Aorta (tissue), 5 donors: ENCODE measurements at regions of chr13 and their contacts with region 1.

Region 1: DNA sequence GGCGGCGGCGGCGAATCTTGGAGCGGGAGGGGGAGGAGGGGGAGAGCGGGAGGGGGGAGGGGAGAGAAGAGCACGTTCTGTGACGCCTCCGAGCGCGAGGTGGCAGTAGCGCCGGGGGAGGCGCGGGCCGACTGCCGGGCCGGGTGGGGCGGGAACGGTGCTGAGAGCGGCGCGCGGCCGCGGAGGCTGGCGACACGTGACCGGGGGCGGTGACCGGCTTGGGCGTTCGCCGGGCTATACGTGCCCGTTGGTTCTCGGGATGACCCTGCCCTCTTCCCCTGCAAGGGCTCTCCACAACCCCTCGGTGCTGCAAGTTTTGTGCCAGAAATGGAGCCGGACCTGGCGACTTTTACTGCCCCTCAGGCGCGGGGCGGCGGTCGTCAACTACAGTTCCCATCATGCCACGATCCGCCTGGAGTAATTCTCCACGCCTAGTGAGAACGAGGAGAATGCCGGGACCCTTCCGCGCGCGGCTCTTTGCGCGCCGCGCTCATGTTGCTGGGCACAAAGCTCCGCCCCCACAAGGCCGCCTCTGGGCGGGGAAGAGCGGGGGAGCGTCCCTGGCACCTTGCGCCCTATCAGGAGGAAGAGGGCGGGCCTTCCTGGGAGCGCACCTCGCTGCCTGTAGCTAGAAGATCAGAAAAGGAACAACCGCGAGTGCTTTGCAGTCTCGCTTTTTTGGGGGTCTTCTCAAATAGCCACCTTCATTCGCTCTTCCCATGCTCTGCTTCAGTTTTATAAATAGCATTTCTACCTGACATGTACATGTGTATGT is at the start of gene KPNA3:
- DNase-seq: peak; percentile 98
- ATAC-seq: peak; percentile 97
- H3K4me3 ChIP-seq: peak within 1 kb of the TSS; percentile 61 to 94
- H3K27ac ChIP-seq: peak within 1 kb of the TSS; percentile 72 to 73
- H3K4me1 ChIP-seq: peaks cover 0 to 3% of the 10 kb centered on the region in 2 donors
- H3K27me3 ChIP-seq: no peaks in the 10 kb centered on the region
- total RNA-seq, gene KPNA3: 29.3 to 29.9 TPM

Region 2: DNA sequence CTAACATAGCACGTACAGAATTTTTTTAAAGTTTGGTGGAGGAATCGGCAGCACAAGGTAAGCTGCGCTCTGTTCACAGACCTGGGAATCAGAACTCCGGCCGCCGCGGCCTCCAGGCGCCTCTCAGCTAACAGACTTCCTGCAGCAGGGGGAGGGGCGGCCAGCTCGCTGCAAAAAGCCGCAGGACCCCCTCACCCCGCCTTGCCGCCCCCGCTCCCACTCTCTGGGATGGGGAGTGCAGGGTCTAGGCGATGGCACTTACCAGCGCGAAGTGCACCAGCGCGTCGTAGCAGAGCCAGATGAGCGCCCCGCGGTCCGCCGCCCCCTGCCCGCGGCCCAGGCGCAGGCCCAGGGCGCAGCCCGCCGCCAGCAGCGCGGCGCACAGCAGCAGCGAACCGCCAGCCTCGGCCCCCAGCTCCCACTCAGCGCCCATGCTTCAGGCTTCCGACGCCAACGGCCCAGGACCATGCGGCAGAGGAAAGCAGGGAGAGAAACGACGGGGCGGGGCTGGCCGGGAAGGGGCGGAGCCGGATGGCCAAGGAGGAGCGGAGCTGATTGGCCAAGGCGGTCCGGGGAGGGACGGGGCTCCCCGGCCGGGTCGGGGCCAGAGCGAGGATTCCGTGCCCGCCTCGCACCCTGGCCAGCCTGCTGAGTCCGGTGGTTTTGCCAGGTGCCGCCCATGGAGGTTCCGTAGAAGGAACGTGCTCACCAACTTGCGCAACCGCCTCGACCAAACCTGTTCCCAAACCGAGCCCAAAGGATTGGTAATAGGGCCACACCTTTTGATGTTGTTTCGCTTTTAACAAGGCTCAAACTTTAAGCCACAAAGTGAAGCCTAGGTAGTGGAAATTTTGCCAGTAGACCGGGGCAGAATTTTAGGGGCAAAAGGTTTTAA is 101.5 kb before region 1 on chr13 and contains the start of gene EBPL:
- intact Hi-C with region 1: loop called in 1 of 2 experiments (anchors 10 kb)
- DNase-seq: peak; percentile 97 to 99
- ATAC-seq: peak; percentile 99
- H3K4me3 ChIP-seq: peak within 1 kb of the TSS; percentile 82 to 92
- H3K27ac ChIP-seq: peak within 1 kb of the TSS in 1 of 2 donors; percentile 30
- H3K4me1 ChIP-seq: no peaks in the 10 kb centered on the region
- H3K27me3 ChIP-seq: no peaks in the 10 kb centered on the region
- total RNA-seq, gene EBPL: 24.2 to 36.4 TPM

Region 3: GRCh38 chr13:49746111-49746510 is 46.6 kb before region 1 on chr13:
- intact Hi-C with region 1: no loop called
- DNase-seq: no peak
- ATAC-seq: no peak
- H3K4me3 ChIP-seq: no peak overlapping the region
- H3K27ac ChIP-seq: no peak overlapping the region
- H3K4me1 ChIP-seq: no peaks in the 10 kb centered on the region
- H3K27me3 ChIP-seq: no peaks in the 10 kb centered on the region

Region 4: DNA sequence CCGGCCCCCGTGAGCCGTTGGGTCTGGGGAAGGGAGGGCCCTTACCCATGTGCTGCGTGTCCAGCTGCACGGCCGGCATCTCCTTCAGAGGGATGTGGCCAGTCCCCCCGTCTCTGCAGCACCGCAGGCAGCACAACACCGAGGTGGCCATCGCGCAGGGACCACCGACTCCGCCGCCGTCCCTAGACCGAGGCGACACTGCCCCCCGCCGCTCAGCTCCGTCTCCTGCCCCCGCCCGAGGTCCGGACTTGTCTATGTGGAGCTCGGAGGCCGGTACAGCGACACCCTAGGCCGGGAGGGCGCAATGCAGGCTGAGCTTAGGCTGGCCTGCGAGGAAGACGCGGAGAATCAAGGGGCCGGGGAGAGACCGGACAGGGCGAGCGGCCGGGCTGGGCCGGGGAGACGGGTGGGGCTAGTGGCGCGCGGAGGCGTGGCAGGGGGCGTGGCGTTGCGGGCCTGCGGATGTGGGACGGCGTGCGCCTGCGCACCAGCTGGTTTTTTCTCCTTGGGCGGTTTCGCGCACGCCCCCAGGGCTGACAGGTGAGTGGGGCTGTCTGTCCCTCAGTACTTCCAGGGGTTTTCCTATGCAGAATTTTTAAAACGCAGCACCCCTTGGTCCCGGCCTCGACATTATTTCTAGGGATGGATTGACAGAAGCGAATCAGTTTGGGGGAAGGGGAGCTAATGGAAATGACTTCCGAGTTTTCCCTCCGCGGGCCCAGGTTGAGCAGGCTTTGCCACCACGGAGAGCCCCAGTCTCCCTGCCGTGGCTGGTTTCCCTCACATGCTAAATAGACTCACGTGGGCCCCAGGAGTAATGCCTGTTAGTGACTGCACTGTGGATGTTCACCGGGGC is 143.6 kb after region 1 on chr13 and contains the start of gene SPRYD7:
- intact Hi-C with region 1: loop called in 1 of 2 experiments (anchors 2 kb)
- DNase-seq: peak; percentile 99 to 100
- ATAC-seq: peak; percentile 100
- H3K4me3 ChIP-seq: peak within 1 kb of the TSS; percentile 69 to 84
- H3K27ac ChIP-seq: peak within 1 kb of the TSS in 1 of 2 donors; percentile 19
- H3K4me1 ChIP-seq: no peaks in the 10 kb centered on the region
- H3K27me3 ChIP-seq: no peaks in the 10 kb centered on the region
- total RNA-seq, gene SPRYD7: 7.3 to 8.6 TPM